ENCODE measurements at regions of chr18 and their contacts with region 1.

Region 1: GRCh38 chr18:28946471-28946870 is 769.5 kb upstream of the CDH2 start:
- DNase-seq: no peak
- ATAC-seq: no peak
- H3K4me3 ChIP-seq: no peak overlapping the region
- H3K27ac ChIP-seq: no peak overlapping the region
- H3K4me1 ChIP-seq: no peaks in the 10 kb centered on the region
- H3K27me3 ChIP-seq: no peaks in the 10 kb centered on the region
- CTCF ChIP-seq: no peak
- EP300 ChIP-seq: no peak
- POLR2A ChIP-seq: no peak
- RAD21 ChIP-seq: no peak

Region 2: GRCh38 chr18:28684746-28685355 is 261.6 kb before region 1 on chr18:
- CTCF ChIA-PET with region 1: no interaction called
- POLR2A ChIA-PET with region 1: no interaction called
- in situ Hi-C with region 1: no loop called
- intact Hi-C with region 1: no loop called
- DNase-seq: no peak
- ATAC-seq: no peak
- H3K4me3 ChIP-seq: no peak overlapping the region
- H3K27ac ChIP-seq: no peak overlapping the region
- H3K4me1 ChIP-seq: no peaks in the 10 kb centered on the region
- H3K27me3 ChIP-seq: no peaks in the 10 kb centered on the region
- CTCF ChIP-seq: no peak
- EP300 ChIP-seq: no peak
- POLR2A ChIP-seq: no peak
- RAD21 ChIP-seq: no peak

Region 3: DNA sequence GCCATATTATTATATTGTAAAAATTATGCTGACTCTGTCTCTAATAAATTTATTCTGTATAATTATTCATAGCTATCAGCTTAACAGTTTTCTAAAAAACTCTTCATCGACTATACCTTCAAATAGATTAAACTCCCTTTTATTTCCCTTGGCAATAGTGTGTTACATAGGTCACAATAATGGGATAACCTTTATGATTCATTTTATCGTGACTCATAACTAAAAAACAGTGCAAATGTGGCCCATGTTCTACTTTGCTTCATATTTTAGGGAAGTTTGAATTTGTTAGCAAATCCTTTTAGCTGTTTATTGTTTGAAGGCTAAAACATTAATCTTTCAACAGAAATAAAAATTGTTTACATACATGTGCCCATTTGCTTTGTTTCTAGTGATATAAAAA is 13.7 kb after region 1 on chr18:
- CTCF ChIA-PET with region 1: no interaction called
- POLR2A ChIA-PET with region 1: no interaction called
- in situ Hi-C with region 1: no loop called
- intact Hi-C with region 1: loop called (anchors 1 kb)
- DNase-seq: no peak
- ATAC-seq: no peak
- H3K4me3 ChIP-seq: no peak overlapping the region
- H3K27ac ChIP-seq: no peak overlapping the region
- H3K4me1 ChIP-seq: no peaks in the 10 kb centered on the region
- H3K27me3 ChIP-seq: no peaks in the 10 kb centered on the region
- CTCF ChIP-seq: no peak
- EP300 ChIP-seq: no peak
- POLR2A ChIP-seq: no peak
- RAD21 ChIP-seq: no peak

Measured in K562 (cell line).